ENCODE measurements at regions of chr1 and their contacts with region 1.

Region 1: DNA sequence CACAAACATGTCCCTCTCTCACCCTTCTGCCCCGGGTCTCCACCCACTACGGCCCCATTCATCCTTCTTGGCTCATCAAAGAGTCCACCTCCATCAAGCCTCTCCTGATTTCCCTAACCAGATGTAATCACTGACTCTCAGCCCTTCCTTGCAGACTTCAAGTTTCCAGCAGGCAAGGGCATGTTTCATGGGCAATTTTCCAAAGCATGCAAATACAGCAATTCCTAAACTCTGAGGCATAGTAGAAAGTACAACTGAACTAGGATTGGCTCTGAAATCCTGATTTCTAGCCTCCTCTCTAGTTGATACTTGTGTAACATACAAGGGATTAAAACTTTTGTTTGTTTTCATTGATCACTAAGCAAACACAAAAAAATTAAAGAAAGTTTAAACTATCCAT is 109.1 kb upstream of the GADD45A start:
- DNase-seq: no peak
- ATAC-seq: no peak
- H3K4me3 ChIP-seq: no peak overlapping the region
- H3K27ac ChIP-seq: no peak overlapping the region
- H3K4me1 ChIP-seq: peaks cover 80% of the 10 kb centered on the region
- H3K27me3 ChIP-seq: no peaks in the 10 kb centered on the region; a peak in 2 of 5 replicates
- CTCF ChIP-seq: no peak
- EP300 ChIP-seq: no peak
- POLR2A ChIP-seq: no peak
- RAD21 ChIP-seq: no peak

Region 2: GRCh38 chr1:67468066-67468718 is 107.7 kb before region 1 on chr1:
- CTCF ChIA-PET with region 1: no interaction called
- POLR2A ChIA-PET with region 1: no interaction called
- in situ Hi-C with region 1: no loop called
- intact Hi-C with region 1: no loop called
- DNase-seq: no peak
- ATAC-seq: no peak
- H3K4me3 ChIP-seq: no peak overlapping the region
- H3K27ac ChIP-seq: no peak overlapping the region
- H3K4me1 ChIP-seq: no peaks in the 10 kb centered on the region
- H3K27me3 ChIP-seq: peaks cover 0 to 15% of the 10 kb centered on the region in 2 experiments; a peak in 2 of 5 replicates
- CTCF ChIP-seq: no peak
- EP300 ChIP-seq: no peak
- POLR2A ChIP-seq: no peak
- RAD21 ChIP-seq: no peak

Region 3: GRCh38 chr1:67629370-67630075 is 53.7 kb after region 1 on chr1:
- CTCF ChIA-PET with region 1: no interaction called
- POLR2A ChIA-PET with region 1: no interaction called
- in situ Hi-C with region 1: no loop called
- intact Hi-C with region 1: loop called (anchors 5 kb)
- DNase-seq: no peak
- ATAC-seq: no peak
- H3K4me3 ChIP-seq: no peak overlapping the region
- H3K27ac ChIP-seq: no peak overlapping the region
- H3K4me1 ChIP-seq: peaks cover 28% of the 10 kb centered on the region
- H3K27me3 ChIP-seq: 0 out of 5 replicates have a peak, but pooled peaks cover 0 to 7% of the 10 kb centered on the region in 2 experiments
- CTCF ChIP-seq: no peak
- EP300 ChIP-seq: no peak
- POLR2A ChIP-seq: no peak
- RAD21 ChIP-seq: no peak

Region 4: DNA sequence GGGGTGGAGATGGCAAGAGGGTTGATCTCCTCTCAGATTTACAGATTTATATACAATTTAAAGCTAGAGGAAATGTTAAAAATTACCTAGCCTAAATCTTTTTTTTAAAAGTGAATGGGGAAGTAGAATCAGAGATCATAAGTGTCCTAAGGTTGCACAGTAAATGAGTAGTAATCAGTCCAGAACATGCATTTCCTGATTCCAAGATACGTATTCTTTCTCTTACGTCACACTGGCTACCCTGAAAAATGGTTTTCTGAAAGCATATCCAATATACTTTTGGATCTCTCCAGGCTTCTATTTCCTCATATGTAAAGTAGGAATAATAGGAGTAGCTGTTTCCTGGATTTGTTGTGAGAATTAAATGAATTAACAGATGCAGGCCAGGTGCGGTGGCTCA is 120.8 kb after region 1 on chr1:
- CTCF ChIA-PET with region 1: no interaction called
- POLR2A ChIA-PET with region 1: no interaction called
- in situ Hi-C with region 1: no loop called
- intact Hi-C with region 1: no loop called
- DNase-seq: no peak
- ATAC-seq: no peak
- H3K4me3 ChIP-seq: no peak overlapping the region
- H3K27ac ChIP-seq: no peak overlapping the region
- H3K4me1 ChIP-seq: peaks cover 60% of the 10 kb centered on the region
- H3K27me3 ChIP-seq: no peaks in the 10 kb centered on the region
- CTCF ChIP-seq: no peak
- EP300 ChIP-seq: no peak
- POLR2A ChIP-seq: no peak
- RAD21 ChIP-seq: no peak

Region 5: GRCh38 chr1:67824766-67825165 is 248.9 kb after region 1 on chr1:
- CTCF ChIA-PET with region 1: no interaction called
- POLR2A ChIA-PET with region 1: no interaction called
- in situ Hi-C with region 1: no loop called
- intact Hi-C with region 1: no loop called
- DNase-seq: no peak
- ATAC-seq: no peak
- H3K4me3 ChIP-seq: no peak overlapping the region
- H3K27ac ChIP-seq: no peak overlapping the region
- H3K4me1 ChIP-seq: no peaks in the 10 kb centered on the region
- H3K27me3 ChIP-seq: no peaks in the 10 kb centered on the region; a peak in 2 of 5 replicates
- CTCF ChIP-seq: no peak
- EP300 ChIP-seq: no peak
- POLR2A ChIP-seq: no peak
- RAD21 ChIP-seq: no peak